Activated CD8-positive, alpha-beta memory T cell treated with anti-CD3 and anti-CD28 coated beads, Interleukin-2, amount 10 ng/mL, durations not matched to agents 7 days and 5 days (primary cell): ENCODE measurements at regions of chr1 and their contacts with region 1.

Region 1: DNA sequence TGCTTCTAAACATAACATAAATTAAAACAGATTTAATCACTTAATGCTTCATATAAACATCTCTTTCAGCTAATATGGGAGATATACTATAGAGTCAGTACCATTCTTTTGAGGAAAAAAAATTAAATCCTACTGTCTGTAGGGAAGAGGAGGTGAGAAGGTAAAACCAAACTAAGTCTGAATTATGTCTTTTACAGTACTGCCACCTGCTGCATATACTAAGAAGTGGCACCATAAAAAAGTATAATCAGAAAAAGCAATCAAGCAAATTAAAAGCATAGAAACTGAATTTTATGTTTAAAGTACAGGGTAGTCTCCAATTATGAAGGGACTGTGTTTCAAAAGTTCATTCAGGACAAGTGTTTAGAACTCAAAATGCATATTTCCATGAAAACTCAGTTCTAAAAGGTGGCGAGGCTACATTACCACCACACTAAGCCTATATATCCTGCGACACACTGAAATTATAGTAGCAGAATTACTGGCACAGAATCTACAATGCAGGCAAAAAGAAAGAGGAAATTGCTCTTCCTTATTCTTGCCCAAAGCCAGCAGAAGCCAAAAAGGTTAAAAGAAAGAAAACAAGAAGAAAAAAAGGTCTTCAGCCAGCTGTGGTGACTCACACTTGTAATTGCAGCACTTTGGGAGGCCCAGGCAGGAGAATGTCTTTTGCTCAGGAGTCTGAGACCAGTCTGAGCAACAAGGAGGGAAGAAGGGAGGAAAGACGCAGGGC is 9.0 kb downstream of the NSL1 start:
- DNase-seq: no peak
- ATAC-seq: peak; percentile 60
- H3K4me3 Mint-ChIP-seq: no peak overlapping the region
- H3K27ac Mint-ChIP-seq: no peak overlapping the region
- H3K4me1 Mint-ChIP-seq: peaks cover 36% of the 10 kb centered on the region
- H3K27me3 Mint-ChIP-seq: no peaks in the 10 kb centered on the region

Region 2: GRCh38 chr1:212683357-212683722 is 99.2 kb before region 1 on chr1:
- CTCF ChIA-PET with region 1: interaction called, 10 read pairs
- DNase-seq: peak; percentile 96
- ATAC-seq: peak; percentile 78
- H3K4me3 Mint-ChIP-seq: peak overlapping the region; percentile 56
- H3K27ac Mint-ChIP-seq: peak overlapping the region; percentile 98
- H3K4me1 Mint-ChIP-seq: peaks cover 92% of the 10 kb centered on the region
- H3K27me3 Mint-ChIP-seq: no peaks in the 10 kb centered on the region